ENCODE measurements at regions of chr1 and their contacts with region 1.

Region 1: GRCh38 chr1:234842726-234843641 is 233.0 kb upstream of the IRF2BP2 start:
- DNase-seq: peak; percentile 95
- ATAC-seq: peak; percentile 74
- H3K4me3 ChIP-seq: peak overlapping the region; percentile 58
- H3K27ac ChIP-seq: peak overlapping the region; percentile 97
- H3K4me1 ChIP-seq: peaks cover 57% of the 10 kb centered on the region
- H3K27me3 ChIP-seq: no peaks in the 10 kb centered on the region
- CTCF ChIP-seq: no peak; a peak in 1 of 6 replicates
- EP300 ChIP-seq: peak in 1 of 2 experiments; percentile 47; a peak in 1 of 4 replicates
- POLR2A ChIP-seq: peak; percentile 81
- RAD21 ChIP-seq: peak; percentile 56

Region 2: DNA sequence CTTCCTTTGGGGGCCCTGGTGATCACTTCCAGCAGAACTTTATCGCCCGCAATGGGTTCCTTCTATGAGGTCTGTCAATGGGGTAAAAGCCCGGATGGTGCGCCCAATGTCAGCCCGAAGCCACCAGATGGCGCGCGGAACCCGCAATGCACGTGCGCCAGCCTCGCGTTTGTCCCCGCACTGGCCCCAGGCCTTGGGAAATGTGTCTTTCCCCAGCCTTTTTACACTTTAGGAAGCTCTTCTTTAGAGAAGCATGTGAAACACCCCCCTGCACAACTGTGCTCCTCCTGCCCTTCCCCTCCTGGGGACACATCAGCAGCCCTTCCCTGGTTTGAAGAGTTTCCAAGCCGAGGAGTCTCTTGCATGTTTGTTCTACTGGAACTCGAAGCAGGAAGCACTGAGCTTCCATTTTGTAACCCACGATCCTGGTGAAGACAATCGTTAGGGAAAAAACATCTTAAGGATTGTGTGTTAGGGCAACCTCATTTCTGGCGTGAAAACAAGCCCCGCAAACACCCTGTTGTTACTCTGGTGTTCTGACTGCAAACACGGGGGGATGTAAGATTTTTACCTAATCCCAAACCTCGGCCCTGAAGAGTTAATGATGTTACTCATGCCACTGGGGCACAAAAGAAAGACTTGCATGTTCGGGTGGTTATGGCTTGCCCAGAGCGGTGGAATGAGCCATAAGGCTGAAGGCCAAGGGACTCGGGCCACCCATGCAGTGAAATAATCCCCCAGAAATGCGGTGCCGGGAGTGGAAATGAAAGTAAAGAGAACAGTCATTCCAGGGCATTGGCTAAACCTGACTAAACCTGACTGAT is 343.7 kb before region 1 on chr1:
- CTCF ChIA-PET with region 1: interaction called, 4 read pairs
- POLR2A ChIA-PET with region 1: interaction called, 3 read pairs
- RAD21 ChIA-PET with region 1: interaction called, 6 read pairs
- SMC1A ChIA-PET with region 1: interaction called, 11 read pairs
- in situ Hi-C with region 1: loop called (anchors 5 kb)
- intact Hi-C with region 1: loop called (anchors 1 kb)
- DNase-seq: no peak
- ATAC-seq: peak; percentile 77
- H3K4me3 ChIP-seq: peak overlapping the region; percentile 14
- H3K27ac ChIP-seq: peak overlapping the region; percentile 69
- H3K4me1 ChIP-seq: peaks cover 45% of the 10 kb centered on the region
- H3K27me3 ChIP-seq: no peaks in the 10 kb centered on the region
- CTCF ChIP-seq: peak; percentile 94 to 96 (median 95); a peak in 5 of 6 replicates
- EP300 ChIP-seq: no peak
- POLR2A ChIP-seq: no peak
- RAD21 ChIP-seq: peak; percentile 96

Region 3: GRCh38 chr1:234691567-234691966 is 151.4 kb before region 1 on chr1:
- CTCF ChIA-PET with region 1: no interaction called
- POLR2A ChIA-PET with region 1: no interaction called
- RAD21 ChIA-PET with region 1: no interaction called
- SMC1A ChIA-PET with region 1: interaction called, 10 read pairs
- in situ Hi-C with region 1: no loop called
- intact Hi-C with region 1: loop called (anchors 2 kb)
- DNase-seq: no peak
- ATAC-seq: peak; percentile 19; the same call in 2 of the 3 replicates
- H3K4me3 ChIP-seq: no peak overlapping the region
- H3K27ac ChIP-seq: no peak overlapping the region
- H3K4me1 ChIP-seq: peaks cover 12% of the 10 kb centered on the region
- H3K27me3 ChIP-seq: no peaks in the 10 kb centered on the region
- CTCF ChIP-seq: no peak
- EP300 ChIP-seq: no peak
- POLR2A ChIP-seq: no peak
- RAD21 ChIP-seq: no peak

Region 4: GRCh38 chr1:234772345-234773147 is 70.4 kb before region 1 on chr1:
- CTCF ChIA-PET with region 1: interaction called, 21 read pairs
- POLR2A ChIA-PET with region 1: interaction called, 27 read pairs
- RAD21 ChIA-PET with region 1: interaction called, 155 read pairs
- SMC1A ChIA-PET with region 1: interaction called, 143 read pairs
- in situ Hi-C with region 1: no loop called
- intact Hi-C with region 1: loop called (anchors 1 kb)
- DNase-seq: peak; percentile 97
- ATAC-seq: peak; percentile 92
- H3K4me3 ChIP-seq: peak overlapping the region; percentile 13; the same call in 1 of the 2 replicates
- H3K27ac ChIP-seq: peak overlapping the region; percentile 89
- H3K4me1 ChIP-seq: peaks cover 37% of the 10 kb centered on the region
- H3K27me3 ChIP-seq: peaks cover 6 to 11% of the 10 kb centered on the region in 2 experiments; a peak in 3 of 4 replicates
- CTCF ChIP-seq: no peak
- EP300 ChIP-seq: peak; percentile 88 to 93; a peak in 3 of 4 replicates
- POLR2A ChIP-seq: peak; percentile 77
- RAD21 ChIP-seq: 0 out of 2 replicates have a peak, but pooled peaks have one; percentile 13

Region 5: GRCh38 chr1:234881893-234882771 is 39.1 kb after region 1 on chr1:
- CTCF ChIA-PET with region 1: interaction called, 8 read pairs
- POLR2A ChIA-PET with region 1: interaction called, 7 read pairs
- RAD21 ChIA-PET with region 1: interaction called, 26 read pairs
- SMC1A ChIA-PET with region 1: interaction called, 30 read pairs
- in situ Hi-C with region 1: no loop called
- intact Hi-C with region 1: loop called (anchors 2 kb)
- DNase-seq: peak; percentile 83
- ATAC-seq: peak; percentile 88
- H3K4me3 ChIP-seq: peak overlapping the region; percentile 53
- H3K27ac ChIP-seq: peak overlapping the region; percentile 73
- H3K4me1 ChIP-seq: peaks cover 50% of the 10 kb centered on the region
- H3K27me3 ChIP-seq: no peaks in the 10 kb centered on the region
- CTCF ChIP-seq: no peak
- EP300 ChIP-seq: peak; percentile 90 to 94
- POLR2A ChIP-seq: no peak
- RAD21 ChIP-seq: no peak

Region 6: DNA sequence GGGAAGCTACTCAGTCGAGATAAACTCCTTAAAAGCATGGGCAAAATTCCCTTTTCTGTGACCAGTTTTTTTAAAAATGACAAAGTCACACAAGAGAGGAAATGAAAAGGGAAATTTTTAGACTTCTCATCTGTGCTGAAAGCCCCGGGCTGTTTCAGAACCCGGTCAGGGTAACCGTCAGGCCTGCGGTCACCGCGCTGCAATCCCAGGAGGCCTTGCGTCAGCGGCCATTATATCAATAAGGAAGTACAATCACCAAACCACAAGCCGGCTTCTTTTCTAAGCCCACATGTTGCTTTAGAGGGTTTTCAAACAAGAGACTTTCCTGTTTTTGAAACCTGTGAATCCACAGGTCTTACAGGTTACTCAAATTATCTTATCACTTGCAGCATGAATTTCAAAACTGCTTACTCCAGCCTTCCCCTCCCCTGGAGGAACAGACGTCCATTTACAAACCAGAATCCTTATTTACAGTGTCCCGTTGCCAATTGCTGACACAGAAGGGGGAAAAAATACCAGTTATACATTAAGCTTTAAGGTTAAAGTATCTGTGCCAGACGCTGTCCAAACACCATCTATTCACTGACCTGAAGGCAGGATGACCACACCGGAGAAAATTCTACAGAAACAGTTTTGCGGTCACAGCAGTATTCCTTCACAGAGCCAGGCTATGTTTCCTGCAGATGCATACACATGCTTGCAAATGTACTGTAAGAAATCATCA is 120.4 kb after region 1 on chr1:
- CTCF ChIA-PET with region 1: interaction called, 4 read pairs
- POLR2A ChIA-PET with region 1: interaction called, 9 read pairs
- RAD21 ChIA-PET with region 1: interaction called, 41 read pairs
- SMC1A ChIA-PET with region 1: interaction called, 34 read pairs
- in situ Hi-C with region 1: no loop called
- intact Hi-C with region 1: loop called (anchors 2 kb)
- DNase-seq: peak; percentile 97
- ATAC-seq: peak; percentile 79
- H3K4me3 ChIP-seq: peak overlapping the region; percentile 45; the same call in 1 of the 2 replicates
- H3K27ac ChIP-seq: peak overlapping the region; percentile 96
- H3K4me1 ChIP-seq: peaks cover 59% of the 10 kb centered on the region
- H3K27me3 ChIP-seq: no peaks in the 10 kb centered on the region
- CTCF ChIP-seq: no peak
- EP300 ChIP-seq: peak; percentile 95 to 99
- POLR2A ChIP-seq: no peak
- RAD21 ChIP-seq: 0 out of 2 replicates have a peak, but pooled peaks have one; percentile 24

Region 7: GRCh38 chr1:235018161-235018560 is 175.2 kb after region 1 on chr1:
- CTCF ChIA-PET with region 1: no interaction called
- POLR2A ChIA-PET with region 1: interaction called, 6 read pairs
- RAD21 ChIA-PET with region 1: interaction called, 4 read pairs
- SMC1A ChIA-PET with region 1: interaction called, 23 read pairs
- in situ Hi-C with region 1: no loop called
- intact Hi-C with region 1: no loop called
- DNase-seq: no peak
- ATAC-seq: no peak
- H3K4me3 ChIP-seq: no peak overlapping the region
- H3K27ac ChIP-seq: peak overlapping the region; percentile 24; the same call in 1 of the 2 replicates
- H3K4me1 ChIP-seq: peaks cover 63% of the 10 kb centered on the region
- H3K27me3 ChIP-seq: no peaks in the 10 kb centered on the region
- CTCF ChIP-seq: no peak
- EP300 ChIP-seq: no peak
- POLR2A ChIP-seq: no peak
- RAD21 ChIP-seq: no peak